ENCODE measurements at regions of chr21 and their contacts with region 1.

Region 1: GRCh38 chr21:31198575-31198974 is 145.5 kb downstream of the TIAM1 start:
- DNase-seq: no peak
- H3K4me3 ChIP-seq: no peak overlapping the region
- H3K27ac ChIP-seq: no peak overlapping the region
- H3K4me1 ChIP-seq: no peaks in the 10 kb centered on the region
- H3K27me3 ChIP-seq: no peaks in the 10 kb centered on the region
- CTCF ChIP-seq: peak; percentile 44 to 80 (median 77)
- POLR2A ChIP-seq: no peak

Region 2: DNA sequence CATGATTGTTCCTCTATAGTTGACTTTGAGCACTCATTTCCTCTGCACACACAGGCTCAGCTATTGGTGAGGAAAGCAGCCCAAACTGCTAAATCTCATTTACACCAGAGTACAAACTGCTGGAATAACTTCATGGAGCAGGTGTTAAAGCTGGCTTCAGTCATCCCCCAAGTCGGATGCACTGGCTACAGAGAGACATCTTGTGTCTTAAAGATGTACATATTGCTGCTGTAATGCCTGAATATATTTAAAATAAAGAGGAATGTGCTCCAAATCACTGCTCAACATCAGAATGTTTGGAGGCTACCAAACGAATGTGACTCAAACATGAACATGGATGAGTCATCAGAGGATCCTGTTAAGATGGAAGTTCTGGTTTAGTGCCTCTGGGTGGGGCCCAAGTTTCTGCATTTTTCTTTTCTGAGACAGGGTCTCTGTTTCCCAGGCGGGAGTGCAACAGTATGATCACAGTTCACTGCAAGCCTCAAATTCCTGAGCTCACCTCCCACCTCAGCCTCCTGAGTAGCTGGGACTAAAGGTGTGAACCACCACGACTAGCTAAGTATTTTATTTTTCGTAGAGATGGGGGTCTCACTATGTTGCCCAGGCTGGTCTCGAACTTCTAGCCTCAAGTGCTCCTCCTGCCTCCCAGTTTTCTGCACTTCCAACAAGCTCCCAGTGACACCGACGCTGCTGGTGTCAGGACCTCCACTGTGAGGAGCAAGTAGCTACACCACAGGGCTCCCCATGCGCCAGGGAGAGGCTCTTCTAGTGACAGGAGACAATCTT is 81.3 kb before region 1 on chr21:
- intact Hi-C with region 1: no loop called
- DNase-seq: no peak
- H3K4me3 ChIP-seq: no peak overlapping the region
- H3K27ac ChIP-seq: no peak overlapping the region
- H3K4me1 ChIP-seq: peaks cover 11% of the 10 kb centered on the region
- H3K27me3 ChIP-seq: no peaks in the 10 kb centered on the region
- CTCF ChIP-seq: no peak
- POLR2A ChIP-seq: no peak

Region 3: GRCh38 chr21:31576428-31576827 is 377.9 kb after region 1 on chr21:
- intact Hi-C with region 1: loop called (anchors 10 kb)
- DNase-seq: no peak
- H3K4me3 ChIP-seq: no peak overlapping the region
- H3K27ac ChIP-seq: no peak overlapping the region
- H3K4me1 ChIP-seq: no peaks in the 10 kb centered on the region
- H3K27me3 ChIP-seq: no peaks in the 10 kb centered on the region
- CTCF ChIP-seq: no peak
- POLR2A ChIP-seq: no peak

Region 4: GRCh38 chr21:31612894-31613745 is 414.5 kb after region 1 on chr21:
- intact Hi-C with region 1: loop called (anchors 10 kb)
- DNase-seq: no peak
- H3K4me3 ChIP-seq: no peak overlapping the region
- H3K27ac ChIP-seq: no peak overlapping the region
- H3K4me1 ChIP-seq: no peaks in the 10 kb centered on the region
- H3K27me3 ChIP-seq: no peaks in the 10 kb centered on the region
- CTCF ChIP-seq: no peak
- POLR2A ChIP-seq: no peak

Measured in vagina (tissue), 2 donors.